Dorsolateral prefrontal cortex (tissue), 120 donors: ENCODE measurements at regions of chr3 and their contacts with region 1.

Region 1: DNA sequence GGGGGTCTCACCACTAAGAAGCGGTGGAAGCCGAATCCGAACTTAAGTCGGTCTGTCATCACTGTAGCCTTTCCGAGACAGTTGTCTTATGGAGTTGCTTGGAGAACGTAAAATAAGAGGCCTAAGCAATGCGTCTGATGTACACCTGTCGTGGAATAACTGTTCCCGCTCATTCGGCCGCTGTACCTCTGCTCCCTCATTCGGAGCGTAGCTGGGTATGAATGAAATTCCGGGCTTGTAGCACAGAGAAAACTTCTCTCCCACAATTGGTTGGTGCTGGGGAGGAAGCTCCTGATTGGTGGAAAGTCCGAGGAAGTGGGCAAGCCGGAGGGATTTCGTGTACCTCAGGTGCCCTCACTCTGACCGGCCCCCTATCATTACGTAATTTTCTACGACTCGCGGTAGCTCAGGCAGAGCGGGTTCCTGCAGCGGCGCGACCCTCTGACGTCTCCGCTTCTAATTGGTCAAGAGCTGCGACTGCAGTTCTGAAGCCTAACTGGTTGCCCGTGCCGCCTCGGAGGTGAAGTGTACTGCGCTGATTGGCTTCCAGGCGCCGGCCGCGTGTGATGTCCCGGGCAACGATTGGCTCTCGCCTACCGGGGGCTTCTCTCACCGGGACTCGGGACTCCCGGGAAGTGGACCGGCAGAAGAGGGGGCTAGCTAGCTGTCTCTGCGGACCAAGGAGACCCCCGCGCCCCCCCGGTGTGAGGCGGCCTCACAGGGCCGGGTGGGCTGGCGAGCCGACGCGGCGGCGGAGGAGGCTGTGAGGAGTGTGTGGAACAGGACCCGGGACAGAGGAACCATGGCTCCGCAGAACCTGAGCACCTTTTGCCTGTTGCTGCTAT is at the start of gene DNAJB11:
- DNase-seq: peak; percentile 99 to 100 (median 100)
- H3K4me3 ChIP-seq: peak within 1 kb of the TSS; percentile 52 to 99 (median 92)
- H3K27ac ChIP-seq: peak within 1 kb of the TSS in 56 of 59 donors; percentile 25 to 97 (median 78)
- H3K27me3 ChIP-seq: no peaks in the 10 kb centered on the region
- CTCF ChIP-seq: peak in 25 of 56 donors; percentile 7 to 55 (median 28)
- total RNA-seq, gene DNAJB11: 13.8 to 50.8 (median 25.0) TPM

Region 2: GRCh38 chr3:185585859-185586685 is 984.2 kb before region 1 on chr3 and contains the start of gene SENP2:
- intact Hi-C with region 1: loop called in 1 of 2 experiments (anchors 10 kb)
- DNase-seq: peak; percentile 99 to 100 (median 99)
- H3K4me3 ChIP-seq: peak within 1 kb of the TSS; percentile 61 to 100 (median 95)
- H3K27ac ChIP-seq: peak within 1 kb of the TSS; percentile 37 to 98 (median 92)
- H3K27me3 ChIP-seq: no peaks in the 10 kb centered on the region
- CTCF ChIP-seq: peak in 23 of 56 donors; percentile 3 to 56 (median 27)
- total RNA-seq, gene SENP2: 51.6 to 106 (median 75.9) TPM

Region 3: GRCh38 chr3:187473778-187474406 is 903.6 kb after region 1 on chr3:
- intact Hi-C with region 1: no loop called
- DNase-seq: no peak
- H3K4me3 ChIP-seq: no peak overlapping the region
- H3K27ac ChIP-seq: no peak overlapping the region
- H3K27me3 ChIP-seq: no peaks in the 10 kb centered on the region
- CTCF ChIP-seq: no peak

Region 4: DNA sequence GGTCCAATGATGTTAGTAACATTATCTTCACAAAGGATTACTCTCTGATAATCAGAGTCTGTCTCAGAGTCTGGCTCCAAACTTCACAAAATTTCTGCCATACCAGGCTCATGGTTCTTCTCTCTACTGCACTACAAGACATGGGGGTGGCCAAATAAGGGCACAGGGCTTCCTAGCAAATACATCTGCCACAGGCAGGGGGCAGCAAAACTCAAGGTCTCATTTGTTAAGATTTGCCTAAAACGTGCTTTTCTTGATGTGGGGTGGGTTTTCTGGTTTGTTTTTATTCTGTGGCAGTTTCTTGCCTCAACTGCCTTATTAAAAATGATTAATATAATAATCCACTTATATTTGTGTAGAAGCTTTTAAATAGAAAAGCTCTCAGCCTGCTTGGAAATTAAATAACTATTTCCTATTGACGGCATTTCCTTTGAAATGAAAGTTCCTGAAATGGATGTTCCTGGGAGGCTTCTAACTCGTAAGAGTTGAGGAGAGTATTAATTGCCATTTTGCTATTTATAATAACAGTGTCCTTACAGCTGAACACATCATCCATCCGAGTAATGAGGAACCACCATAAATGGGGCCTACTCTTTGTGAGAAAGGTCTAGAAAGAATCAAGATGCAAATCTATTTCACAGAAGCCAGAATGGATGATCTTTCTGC is 1046.1 kb after region 1 on chr3:
- intact Hi-C with region 1: no loop called
- DNase-seq: peak in 3 of 10 donors; percentile 9 to 29 (median 25)
- H3K4me3 ChIP-seq: no peak overlapping the region
- H3K27ac ChIP-seq: no peak overlapping the region
- H3K27me3 ChIP-seq: peaks cover 0 to 8% (median 0%) of the 10 kb centered on the region in 45 donors
- CTCF ChIP-seq: peak; percentile 41 to 78 (median 64)